Breast epithelium (tissue), 4 donors: ENCODE measurements at regions of chr6 and their contacts with region 1.

Region 1: DNA sequence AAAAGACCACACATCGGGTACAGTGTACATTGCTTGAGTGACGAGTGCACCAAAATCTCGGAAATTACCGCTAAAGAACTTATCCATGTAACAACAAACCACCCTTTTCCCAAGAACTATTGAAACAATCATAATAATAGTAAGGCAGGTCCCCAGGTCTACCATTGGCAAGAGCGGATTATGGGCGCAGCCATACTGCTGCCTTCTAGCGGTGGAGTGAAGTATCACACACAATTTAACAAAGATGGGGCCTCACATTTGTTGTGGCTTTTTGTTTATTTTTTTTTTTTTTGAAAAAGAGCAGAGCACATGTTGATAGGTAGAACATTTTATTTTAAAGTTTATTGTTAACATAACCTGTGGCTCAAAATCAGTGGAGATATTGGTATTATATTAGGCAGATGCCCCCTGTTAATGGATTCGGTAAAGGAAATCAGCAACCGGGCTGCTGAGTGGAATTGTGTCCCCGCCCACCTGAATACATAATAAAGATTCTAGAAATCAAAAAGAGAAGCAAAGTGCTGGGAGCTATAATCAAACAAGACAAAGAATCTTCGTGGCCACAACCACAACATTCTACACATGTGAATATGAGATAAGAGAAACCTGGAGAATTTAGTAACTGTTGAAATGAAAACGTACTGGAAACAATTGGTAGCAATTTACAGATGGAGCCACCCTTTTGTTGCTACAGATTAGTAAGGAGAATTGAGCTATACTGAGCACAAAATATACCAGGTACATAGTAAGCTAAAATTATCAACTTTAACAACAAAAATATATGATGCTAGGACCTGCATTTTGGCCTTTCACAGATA is 94.2 kb upstream of the EXOC2 start:
- DNase-seq: no peak
- H3K4me3 ChIP-seq: no peak overlapping the region
- H3K27ac ChIP-seq: no peak overlapping the region
- H3K4me1 ChIP-seq: no peaks in the 10 kb centered on the region
- H3K27me3 ChIP-seq: peaks cover 0 to 5% of the 10 kb centered on the region in 2 donors
- CTCF ChIP-seq: peak in 1 of 3 donors; percentile 37
- POLR2A ChIP-seq: no peak

Region 2: DNA sequence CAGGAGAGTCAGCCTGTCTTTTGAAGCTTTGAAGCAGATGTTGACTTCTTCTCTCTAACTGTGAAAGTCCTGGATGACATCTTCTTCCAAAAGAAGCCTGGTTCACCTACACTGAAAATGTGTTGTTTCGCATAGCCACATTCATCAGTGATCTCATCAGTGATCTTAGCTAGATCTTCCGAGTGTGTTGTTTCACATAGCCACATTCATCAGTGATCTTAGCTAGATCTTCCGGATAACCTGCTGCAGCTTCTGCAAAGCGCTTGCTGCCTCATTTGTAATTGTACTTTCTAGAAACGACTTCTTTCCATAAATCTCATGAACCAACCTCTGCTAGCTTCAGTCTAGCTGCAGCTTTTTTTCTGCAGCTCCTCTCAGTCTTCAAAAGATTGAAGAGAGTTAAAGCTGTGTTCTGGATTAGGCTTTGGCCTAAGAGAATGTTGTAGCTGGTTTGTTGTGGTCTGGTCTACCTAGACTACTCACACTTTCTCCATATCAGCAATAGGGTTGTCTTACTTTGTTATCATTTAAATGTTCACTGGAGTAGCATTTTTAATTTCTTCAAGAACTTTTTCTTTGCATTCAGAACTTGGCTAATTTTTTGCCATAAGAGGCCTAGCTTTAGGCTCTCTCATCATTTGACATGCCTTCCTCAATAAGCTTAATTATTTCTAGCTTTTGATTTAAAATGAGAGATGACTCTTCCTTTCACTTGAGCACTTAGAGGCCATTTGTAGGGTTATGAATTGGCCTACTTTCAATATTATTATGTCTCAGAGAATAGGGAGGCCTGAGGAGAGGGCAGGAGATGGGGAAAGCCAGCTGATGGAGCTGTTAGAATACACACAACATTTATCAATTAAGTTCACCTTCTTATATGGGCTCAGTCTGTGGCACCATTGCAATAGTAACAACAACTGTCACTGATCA is 45.5 kb before region 1 on chr6:
- intact Hi-C with region 1: loop called (anchors 2 kb)
- DNase-seq: no peak
- H3K4me3 ChIP-seq: no peak overlapping the region
- H3K27ac ChIP-seq: no peak overlapping the region
- H3K4me1 ChIP-seq: no peaks in the 10 kb centered on the region
- H3K27me3 ChIP-seq: no peaks in the 10 kb centered on the region
- CTCF ChIP-seq: no peak
- POLR2A ChIP-seq: no peak